ENCODE measurements at regions of chr11 and their contacts with region 1.

Region 1: GRCh38 chr11:119533921-119534736 is 111.2 kb upstream of the THY1 start:
- DNase-seq: peak; percentile 95

Region 2: DNA sequence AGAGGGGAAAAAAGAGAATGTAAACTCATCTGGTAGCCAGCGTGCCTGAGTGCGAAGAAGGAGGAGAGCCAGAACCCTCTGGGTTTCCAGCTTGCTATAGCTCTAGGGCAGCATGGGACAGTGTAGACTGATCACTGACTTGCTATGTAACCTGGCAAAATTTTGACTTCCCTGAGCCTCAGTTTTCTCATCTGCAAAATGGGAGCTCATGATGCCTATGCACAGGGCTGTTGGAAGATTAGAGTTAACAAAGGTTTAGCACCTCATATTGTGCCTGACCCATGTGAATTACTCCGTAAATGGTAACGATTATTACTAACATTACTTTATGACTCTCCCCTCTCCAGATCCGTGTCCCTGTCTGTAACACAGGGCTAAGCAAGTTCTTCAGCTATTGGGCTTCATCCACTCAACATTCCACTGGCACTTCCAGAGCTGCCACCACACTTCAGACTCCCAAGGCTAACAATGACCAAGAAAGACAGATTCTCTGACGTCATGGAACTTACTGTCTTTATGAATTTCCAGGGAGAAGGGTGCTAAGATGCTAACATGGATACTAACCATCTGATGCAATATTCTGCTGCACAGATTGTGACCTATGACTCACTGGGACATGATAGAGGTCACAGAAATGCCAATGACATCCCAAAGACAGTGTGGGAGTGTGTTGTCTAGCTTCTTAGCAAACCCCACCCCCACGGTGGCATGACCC is 408.6 kb after region 1 on chr11:
- intact Hi-C with region 1: loop called in 1 of 2 experiments (anchors 5 kb)
- DNase-seq: peak; percentile 28

Measured in posterior vena cava (tissue), 2 donors.